ENCODE measurements at regions of chr2 and their contacts with region 1.

Region 1: DNA sequence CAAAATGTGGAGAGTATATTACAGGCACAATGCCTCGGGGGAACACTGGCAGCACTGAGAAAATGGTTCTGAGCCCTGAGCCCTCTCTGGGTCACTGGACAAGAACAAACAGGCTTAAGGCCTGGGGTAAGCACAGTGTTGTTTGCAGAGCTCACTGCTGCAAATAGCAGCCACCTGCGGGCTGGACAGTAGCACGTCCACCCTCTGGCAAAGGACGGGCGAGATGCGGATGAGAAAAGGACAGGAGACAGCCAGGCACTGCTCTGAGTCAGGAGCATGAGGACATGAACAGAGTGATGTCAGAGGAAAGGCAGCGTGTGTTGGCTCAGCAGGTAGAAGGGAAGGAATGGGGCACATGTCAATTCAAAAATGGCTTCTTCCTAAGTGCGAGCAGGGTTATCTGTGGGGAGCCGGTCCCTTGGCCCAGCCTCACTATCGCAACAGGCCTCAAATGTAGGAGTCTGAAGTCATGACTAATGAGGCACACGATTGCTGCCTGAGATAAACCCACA is 25.9 kb upstream of the NEB start:
- DNase-seq: peak; percentile 79
- ATAC-seq: peak; percentile 99
- H3K4me3 ChIP-seq: peak overlapping the region in 1 of 3 experiments; percentile 44; a peak in 2 of 6 replicates
- H3K27ac ChIP-seq: peak overlapping the region; percentile 30
- H3K4me1 ChIP-seq: peaks cover 62% of the 10 kb centered on the region
- H3K27me3 ChIP-seq: no peaks in the 10 kb centered on the region
- CTCF ChIP-seq: peak; percentile 55
- EP300 ChIP-seq: peak in 1 of 2 experiments; percentile 50; a peak in 1 of 4 replicates
- POLR2A ChIP-seq: 0 out of 4 replicates have a peak, but pooled peaks of 1 of the 2 experiments have one; percentile 23
- RAD21 ChIP-seq: peak; percentile 43; the same call in 1 of the 2 replicates

Region 2: GRCh38 chr2:151691631-151692030 is 68.6 kb before region 1 on chr2:
- CTCF ChIA-PET with region 1: no interaction called
- POLR2A ChIA-PET with region 1: no interaction called
- in situ Hi-C with region 1: no loop called
- intact Hi-C with region 1: no loop called
- DNase-seq: no peak
- ATAC-seq: no peak
- H3K4me3 ChIP-seq: no peak overlapping the region
- H3K27ac ChIP-seq: no peak overlapping the region
- H3K4me1 ChIP-seq: no peaks in the 10 kb centered on the region
- H3K27me3 ChIP-seq: 0 out of 5 replicates have a peak, but pooled peaks cover 0 to 14% of the 10 kb centered on the region in 2 experiments
- CTCF ChIP-seq: no peak
- EP300 ChIP-seq: no peak
- POLR2A ChIP-seq: no peak
- RAD21 ChIP-seq: no peak

Region 3: DNA sequence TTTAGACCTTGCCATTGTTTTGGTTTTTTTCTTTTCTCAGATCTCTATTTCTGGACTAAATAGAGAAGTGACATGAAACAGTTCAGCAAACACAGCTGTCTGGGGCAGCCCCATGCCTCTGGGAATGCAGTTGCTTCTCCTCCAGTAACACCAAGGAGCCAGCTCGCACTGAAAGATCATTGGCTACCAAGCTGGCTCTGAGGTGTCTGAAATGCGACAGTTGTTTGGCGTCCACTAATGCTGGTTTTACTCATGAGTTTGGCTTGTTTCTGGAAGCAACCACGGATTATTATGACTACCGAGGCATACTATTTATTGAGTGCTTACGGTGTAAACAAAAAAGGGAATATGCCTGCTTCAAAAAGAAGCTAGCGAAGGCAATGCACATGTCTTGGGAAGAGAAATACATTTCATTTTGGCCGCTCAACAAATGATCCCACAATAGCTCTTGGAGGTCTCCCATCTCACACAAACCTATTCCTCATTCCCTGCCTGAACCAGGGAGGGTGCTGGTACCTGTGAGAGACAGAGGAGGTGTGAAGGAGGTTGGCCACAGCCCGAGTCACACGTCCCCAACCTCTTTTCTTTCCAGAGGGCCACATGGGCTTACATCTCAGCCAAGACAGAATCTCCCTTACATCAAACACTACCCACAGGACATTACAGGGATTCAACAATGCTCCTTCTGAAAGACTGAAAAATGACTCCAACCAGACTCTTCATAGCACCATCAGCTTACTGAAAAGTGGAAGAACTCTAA is 11.6 kb after region 1 on chr2:
- CTCF ChIA-PET with region 1: no interaction called
- POLR2A ChIA-PET with region 1: no interaction called
- in situ Hi-C with region 1: no loop called
- intact Hi-C with region 1: no loop called
- DNase-seq: no peak
- ATAC-seq: no peak
- H3K4me3 ChIP-seq: no peak overlapping the region
- H3K27ac ChIP-seq: no peak overlapping the region
- H3K4me1 ChIP-seq: no peaks in the 10 kb centered on the region
- H3K27me3 ChIP-seq: no peaks in the 10 kb centered on the region
- CTCF ChIP-seq: no peak
- EP300 ChIP-seq: no peak
- POLR2A ChIP-seq: no peak
- RAD21 ChIP-seq: no peak

Region 4: GRCh38 chr2:151792589-151792988 is 32.4 kb after region 1 on chr2:
- CTCF ChIA-PET with region 1: no interaction called
- POLR2A ChIA-PET with region 1: no interaction called
- in situ Hi-C with region 1: no loop called
- intact Hi-C with region 1: loop called (anchors 2 kb)
- DNase-seq: peak; percentile 32
- ATAC-seq: peak; percentile 87
- H3K4me3 ChIP-seq: no peak overlapping the region
- H3K27ac ChIP-seq: no peak overlapping the region
- H3K4me1 ChIP-seq: no peaks in the 10 kb centered on the region
- H3K27me3 ChIP-seq: no peaks in the 10 kb centered on the region
- CTCF ChIP-seq: peak; percentile 66
- EP300 ChIP-seq: no peak
- POLR2A ChIP-seq: no peak
- RAD21 ChIP-seq: 0 out of 2 replicates have a peak, but pooled peaks have one; percentile 25

Measured in HepG2 (cell line).